Activated CD4-positive, alpha-beta T cell treated with anti-CD3 and anti-CD28 coated beads for 36 hours (primary cell): ENCODE measurements at regions of chr6 and their contacts with region 1.

Region 1: DNA sequence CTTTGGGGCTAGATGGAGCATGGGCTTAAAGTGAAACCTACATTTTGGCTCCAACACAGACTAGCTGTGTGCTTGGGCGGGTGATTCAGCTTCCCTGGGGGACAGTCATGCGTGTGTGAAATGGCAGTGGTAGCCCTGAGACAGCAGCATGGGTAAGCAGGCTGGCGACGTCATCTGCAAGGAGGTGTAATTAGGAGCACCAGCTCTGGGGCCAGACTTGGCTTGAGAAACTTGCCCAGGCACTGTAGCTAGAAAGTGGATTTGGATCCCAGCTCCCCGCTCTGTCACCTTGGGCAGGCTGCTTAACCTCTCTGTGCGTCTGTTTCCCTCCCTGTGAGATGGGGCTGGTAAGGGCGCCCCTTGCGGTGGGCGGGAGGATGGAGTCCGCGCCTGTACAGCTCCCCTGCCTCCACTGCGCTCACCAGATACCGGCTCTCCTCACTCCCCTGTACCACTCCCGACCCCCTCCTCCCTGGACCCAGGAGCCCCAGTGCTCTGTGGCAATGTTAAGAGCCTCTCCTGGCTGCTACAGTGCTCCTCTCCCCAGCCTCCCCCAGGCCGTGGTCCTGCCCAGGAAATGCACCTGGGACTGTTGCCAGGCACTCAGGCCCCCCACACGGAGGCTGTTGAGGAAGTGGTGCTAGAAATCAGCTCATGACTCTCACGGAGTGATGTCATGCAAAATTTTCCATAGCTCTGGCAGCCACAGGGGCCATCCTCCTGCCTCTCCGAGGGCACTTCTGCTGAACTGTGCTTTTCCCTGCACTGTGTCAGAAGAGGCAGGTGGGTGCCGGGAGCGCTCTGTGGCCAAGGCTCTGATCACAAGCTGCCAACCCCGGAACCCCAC is 44.6 kb downstream of the SYNJ2 start:
- DNase-seq: peak; percentile 89
- ATAC-seq: peak; percentile 85
- H3K4me3 Mint-ChIP-seq: peak overlapping the region; percentile 75
- H3K27ac Mint-ChIP-seq: peak overlapping the region; percentile 99
- H3K4me1 Mint-ChIP-seq: peaks cover 38% of the 10 kb centered on the region
- H3K27me3 Mint-ChIP-seq: no peaks in the 10 kb centered on the region

Region 2: DNA sequence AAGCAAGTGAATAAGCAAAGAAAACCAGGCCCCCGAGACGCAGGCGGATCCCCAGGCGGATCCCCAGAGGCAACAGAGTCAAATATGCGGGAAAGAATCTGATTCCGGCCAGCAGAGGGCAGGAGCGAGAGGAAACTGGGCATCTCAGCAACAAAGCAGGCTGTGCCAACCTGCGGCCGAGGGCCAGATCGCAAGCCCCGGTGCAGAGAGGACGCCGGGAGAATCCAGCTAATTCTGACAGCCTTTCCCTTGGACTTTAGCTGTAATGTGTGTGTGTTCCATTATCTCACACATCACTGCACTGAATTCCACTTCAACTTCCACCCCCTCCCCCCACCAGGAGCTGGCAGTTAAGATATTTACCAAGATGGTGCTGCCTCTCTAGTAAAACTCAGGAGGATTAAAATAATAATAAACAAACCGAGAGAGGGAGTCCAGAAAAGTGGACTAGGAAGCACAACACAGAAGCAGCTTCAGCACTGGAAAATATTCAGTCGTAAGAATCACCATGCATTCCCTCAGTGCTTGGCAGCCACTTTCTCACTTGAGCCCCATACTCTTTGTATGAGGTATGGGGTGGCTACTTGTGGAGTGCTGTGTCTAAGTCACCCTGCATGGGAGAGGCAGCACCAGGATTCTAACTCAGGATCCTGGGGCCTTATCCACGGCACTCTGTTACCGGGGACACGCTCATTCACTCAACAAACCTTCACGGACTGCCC is 269.4 kb before region 1 on chr6:
- CTCF ChIA-PET with region 1: interaction called, 12 read pairs
- POLR2A ChIA-PET with region 1: no interaction called
- intact Hi-C with region 1: no loop called
- DNase-seq: peak; percentile 91
- ATAC-seq: peak; percentile 23
- H3K4me3 Mint-ChIP-seq: peak overlapping the region; percentile 48
- H3K27ac Mint-ChIP-seq: peak overlapping the region; percentile 87
- H3K4me1 Mint-ChIP-seq: peaks cover 94% of the 10 kb centered on the region
- H3K27me3 Mint-ChIP-seq: peaks cover 5% of the 10 kb centered on the region

Region 3: DNA sequence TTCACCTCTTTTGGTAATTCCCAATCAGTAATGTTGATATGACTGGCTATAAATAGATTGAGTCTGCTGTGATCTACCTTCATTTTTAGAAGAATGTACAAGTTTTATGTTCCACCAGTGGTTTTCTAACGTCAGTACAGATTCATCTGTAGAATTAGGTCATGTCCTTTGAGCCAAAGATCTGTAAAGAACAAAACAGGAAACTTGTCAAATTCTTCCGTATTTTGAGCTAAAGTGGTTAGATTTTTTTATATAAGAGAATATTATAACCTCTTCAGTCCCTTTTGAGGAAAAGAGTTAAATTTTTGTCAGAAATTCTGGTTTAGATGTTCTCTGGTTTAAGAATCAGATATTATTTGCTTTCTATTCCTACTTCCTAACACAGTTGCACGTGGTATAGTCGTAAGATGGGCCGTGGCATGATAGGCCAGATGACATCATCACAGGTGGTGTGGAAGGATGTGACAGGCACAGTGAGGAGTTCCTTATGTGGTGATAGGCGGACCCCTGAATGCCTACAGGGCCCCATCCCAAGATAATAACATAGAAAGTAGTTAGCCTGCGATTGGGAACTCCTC is 141.0 kb before region 1 on chr6:
- CTCF ChIA-PET with region 1: interaction called, 3 read pairs
- POLR2A ChIA-PET with region 1: no interaction called
- intact Hi-C with region 1: loop called in 1 of 2 experiments (anchors 1 kb)
- DNase-seq: peak; percentile 78
- ATAC-seq: peak; percentile 89
- H3K4me3 Mint-ChIP-seq: peak overlapping the region; percentile 17
- H3K27ac Mint-ChIP-seq: peak overlapping the region; percentile 92
- H3K4me1 Mint-ChIP-seq: peaks cover 76% of the 10 kb centered on the region
- H3K27me3 Mint-ChIP-seq: no peaks in the 10 kb centered on the region

Region 4: DNA sequence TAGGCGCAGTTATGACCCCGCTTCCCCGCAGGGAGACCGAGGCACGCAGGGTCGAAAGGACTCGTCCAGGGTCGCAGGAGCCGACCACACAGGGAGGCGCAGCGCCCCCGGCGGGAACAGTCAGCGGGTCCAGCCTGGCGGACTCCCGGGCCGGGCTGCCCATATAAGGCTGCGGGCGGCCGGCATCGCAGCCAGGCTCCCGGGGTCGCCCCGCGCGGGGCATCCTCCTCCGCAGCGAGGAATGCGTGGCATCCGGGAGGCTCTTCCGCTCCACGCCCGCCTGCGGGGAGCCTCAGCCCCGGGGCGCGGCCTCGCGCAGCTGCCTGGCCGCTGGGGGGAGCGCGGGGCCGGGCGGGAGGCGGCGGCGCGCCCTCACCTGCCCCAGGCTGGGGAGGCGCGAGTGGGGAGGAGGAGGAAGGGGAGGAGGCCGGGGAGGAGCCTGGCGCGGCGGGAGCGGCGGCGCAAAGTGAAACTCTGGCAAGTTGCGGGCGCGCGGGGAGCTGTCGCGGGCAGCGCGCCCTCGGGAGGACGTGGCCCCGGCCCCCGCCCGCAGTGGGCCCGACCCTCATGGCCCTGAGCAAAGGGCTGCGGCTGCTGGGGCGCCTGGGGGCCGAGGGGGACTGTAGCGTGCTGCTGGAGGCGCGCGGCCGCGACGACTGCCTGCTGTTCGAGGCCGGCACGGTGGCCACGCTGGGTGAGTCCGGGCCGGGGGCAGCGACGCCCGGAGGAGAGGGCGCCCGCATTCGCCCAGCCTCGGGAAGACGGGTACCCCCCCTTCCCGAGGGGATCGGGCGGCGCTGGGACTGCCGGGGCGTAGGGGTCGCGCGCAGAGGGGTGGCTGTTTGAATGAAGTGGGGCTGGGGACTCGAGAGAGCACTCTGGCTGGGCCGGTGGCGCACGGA is 44.6 kb before region 1 on chr6 and contains the start of gene SYNJ2:
- CTCF ChIA-PET with region 1: interaction called, 12 read pairs
- POLR2A ChIA-PET with region 1: interaction called, 10 read pairs
- intact Hi-C with region 1: loop called (anchors 1 kb)
- DNase-seq: peak; percentile 90
- ATAC-seq: peak; percentile 84
- H3K4me3 Mint-ChIP-seq: peak within 1 kb of the TSS; percentile 91
- H3K27ac Mint-ChIP-seq: peak within 1 kb of the TSS; percentile 93
- H3K4me1 Mint-ChIP-seq: peaks cover 42% of the 10 kb centered on the region
- H3K27me3 Mint-ChIP-seq: peaks cover 1% of the 10 kb centered on the region
- total RNA-seq, gene SYNJ2: 28.6 to 30.1 TPM

Region 5: DNA sequence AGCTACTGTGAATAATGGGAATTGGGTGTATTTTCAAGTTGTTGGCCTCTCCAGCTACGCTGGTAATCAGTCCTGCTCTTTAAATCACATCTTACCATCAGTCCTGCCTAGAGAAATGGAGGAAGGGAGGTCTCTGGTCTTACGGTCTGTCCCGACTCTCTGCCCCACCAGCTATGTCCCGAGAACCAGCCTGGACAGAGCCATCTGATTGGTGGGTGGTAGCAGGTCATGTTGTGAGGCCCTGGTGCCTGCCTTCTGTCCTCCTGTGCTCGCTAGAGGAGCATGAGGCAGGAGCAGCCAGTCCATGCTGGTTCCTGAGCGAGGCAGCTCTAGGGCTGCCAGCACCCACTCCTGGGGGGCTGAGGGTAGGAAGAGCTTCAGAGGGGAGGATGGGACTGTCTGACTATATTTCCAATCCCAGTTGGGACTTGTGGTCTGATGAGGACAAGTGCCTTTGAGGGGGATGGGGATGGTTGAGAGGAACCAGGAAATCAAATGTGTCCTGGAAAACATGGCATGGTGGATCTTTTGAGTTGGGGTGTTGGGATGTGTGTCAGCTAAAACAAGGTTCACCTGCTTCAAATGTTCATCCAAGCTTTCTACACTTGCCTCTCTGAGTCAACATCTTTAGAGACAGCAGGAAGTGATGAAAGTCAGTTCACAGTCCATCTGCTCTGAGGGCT is 11.6 kb before region 1 on chr6:
- CTCF ChIA-PET with region 1: interaction called, 20 read pairs
- POLR2A ChIA-PET with region 1: interaction called, 5 read pairs
- intact Hi-C with region 1: no loop called
- DNase-seq: no peak
- ATAC-seq: peak; percentile 79
- H3K4me3 Mint-ChIP-seq: no peak overlapping the region
- H3K27ac Mint-ChIP-seq: peak overlapping the region; percentile 77
- H3K4me1 Mint-ChIP-seq: peaks cover 50% of the 10 kb centered on the region
- H3K27me3 Mint-ChIP-seq: no peaks in the 10 kb centered on the region

Region 6: GRCh38 chr6:158047127-158047518 is 20.8 kb after region 1 on chr6:
- CTCF ChIA-PET with region 1: interaction called, 23 read pairs
- POLR2A ChIA-PET with region 1: interaction called, 9 read pairs
- intact Hi-C with region 1: loop called in 1 of 2 experiments (anchors 1 kb)
- DNase-seq: peak; percentile 91
- ATAC-seq: peak; percentile 93
- H3K4me3 Mint-ChIP-seq: peak overlapping the region; percentile 25
- H3K27ac Mint-ChIP-seq: peak overlapping the region; percentile 85
- H3K4me1 Mint-ChIP-seq: peaks cover 33% of the 10 kb centered on the region
- H3K27me3 Mint-ChIP-seq: no peaks in the 10 kb centered on the region

Region 7: GRCh38 chr6:158072083-158072721 is 45.9 kb after region 1 on chr6:
- CTCF ChIA-PET with region 1: interaction called, 28 read pairs
- POLR2A ChIA-PET with region 1: interaction called, 3 read pairs
- intact Hi-C with region 1: loop called (anchors 1 kb)
- DNase-seq: peak; percentile 85
- ATAC-seq: peak; percentile 76
- H3K4me3 Mint-ChIP-seq: no peak overlapping the region
- H3K27ac Mint-ChIP-seq: no peak overlapping the region
- H3K4me1 Mint-ChIP-seq: peaks cover 27% of the 10 kb centered on the region
- H3K27me3 Mint-ChIP-seq: no peaks in the 10 kb centered on the region